Activated T-helper 1 cell treated with anti-CD3 and anti-CD28 coated beads, Interleukin-12 subunit alpha, Interleukin-12 subunit beta, Interleukin-2, Interleukin-4 antibody, amounts not matched to agents 30 ng/mL and 10 ng/mL and 1 ng/mL, durations not matched to agents 14 hours and 24 hours and 36 hours (primary cell): ENCODE measurements at regions of chr4 and their contacts with region 1.

Region 1: DNA sequence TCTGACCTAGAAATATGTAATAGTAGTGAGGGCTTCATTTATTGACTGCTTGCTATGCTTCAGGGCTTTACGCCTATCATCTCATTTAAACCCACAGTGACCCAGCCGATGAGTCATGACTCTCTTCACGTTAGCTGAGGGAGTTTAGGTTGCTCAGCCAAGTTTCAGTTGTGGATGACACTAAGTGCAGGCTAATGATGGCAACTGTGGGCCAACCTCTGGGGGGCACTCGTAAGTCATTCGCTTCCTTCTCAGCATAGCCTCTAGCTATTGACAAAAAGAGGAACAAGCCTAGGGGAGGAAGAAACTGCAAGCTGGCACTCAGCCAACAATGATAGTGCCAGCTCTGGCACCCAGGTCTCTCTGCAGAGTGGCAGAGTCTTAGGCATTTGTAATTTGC is 325.0 kb downstream of the ARHGAP10 start:
- DNase-seq: peak; percentile 34
- H3K4me3 Mint-ChIP-seq: no peak overlapping the region
- H3K27ac Mint-ChIP-seq: no peak overlapping the region
- H3K4me1 Mint-ChIP-seq: peaks cover 91% of the 10 kb centered on the region
- H3K27me3 Mint-ChIP-seq: no peaks in the 10 kb centered on the region

Region 2: GRCh38 chr4:148216866-148217814 is 160.3 kb after region 1 on chr4:
- intact Hi-C with region 1: loop called (anchors 10 kb)
- DNase-seq: peak; percentile 37
- H3K4me3 Mint-ChIP-seq: peak overlapping the region; percentile 51
- H3K27ac Mint-ChIP-seq: peak overlapping the region; percentile 48
- H3K4me1 Mint-ChIP-seq: peaks cover 18% of the 10 kb centered on the region
- H3K27me3 Mint-ChIP-seq: no peaks in the 10 kb centered on the region